ENCODE measurements at regions of chr11 and their contacts with region 1.

Region 1: GRCh38 chr11:103055221-103055890 is 36.6 kb downstream of the DCUN1D5 start:
- DNase-seq: no peak
- H3K4me3 Mint-ChIP-seq: no peak overlapping the region
- H3K27ac Mint-ChIP-seq: no peak overlapping the region
- H3K4me1 Mint-ChIP-seq: peaks cover 13% of the 10 kb centered on the region
- H3K27me3 Mint-ChIP-seq: no peaks in the 10 kb centered on the region

Region 2: GRCh38 chr11:102733232-102733875 is 322.0 kb before region 1 on chr11:
- intact Hi-C with region 1: loop called (anchors 1 kb)
- DNase-seq: peak; percentile 15
- H3K4me3 Mint-ChIP-seq: no peak overlapping the region
- H3K27ac Mint-ChIP-seq: no peak overlapping the region
- H3K4me1 Mint-ChIP-seq: no peaks in the 10 kb centered on the region
- H3K27me3 Mint-ChIP-seq: peaks cover 9% of the 10 kb centered on the region

Region 3: DNA sequence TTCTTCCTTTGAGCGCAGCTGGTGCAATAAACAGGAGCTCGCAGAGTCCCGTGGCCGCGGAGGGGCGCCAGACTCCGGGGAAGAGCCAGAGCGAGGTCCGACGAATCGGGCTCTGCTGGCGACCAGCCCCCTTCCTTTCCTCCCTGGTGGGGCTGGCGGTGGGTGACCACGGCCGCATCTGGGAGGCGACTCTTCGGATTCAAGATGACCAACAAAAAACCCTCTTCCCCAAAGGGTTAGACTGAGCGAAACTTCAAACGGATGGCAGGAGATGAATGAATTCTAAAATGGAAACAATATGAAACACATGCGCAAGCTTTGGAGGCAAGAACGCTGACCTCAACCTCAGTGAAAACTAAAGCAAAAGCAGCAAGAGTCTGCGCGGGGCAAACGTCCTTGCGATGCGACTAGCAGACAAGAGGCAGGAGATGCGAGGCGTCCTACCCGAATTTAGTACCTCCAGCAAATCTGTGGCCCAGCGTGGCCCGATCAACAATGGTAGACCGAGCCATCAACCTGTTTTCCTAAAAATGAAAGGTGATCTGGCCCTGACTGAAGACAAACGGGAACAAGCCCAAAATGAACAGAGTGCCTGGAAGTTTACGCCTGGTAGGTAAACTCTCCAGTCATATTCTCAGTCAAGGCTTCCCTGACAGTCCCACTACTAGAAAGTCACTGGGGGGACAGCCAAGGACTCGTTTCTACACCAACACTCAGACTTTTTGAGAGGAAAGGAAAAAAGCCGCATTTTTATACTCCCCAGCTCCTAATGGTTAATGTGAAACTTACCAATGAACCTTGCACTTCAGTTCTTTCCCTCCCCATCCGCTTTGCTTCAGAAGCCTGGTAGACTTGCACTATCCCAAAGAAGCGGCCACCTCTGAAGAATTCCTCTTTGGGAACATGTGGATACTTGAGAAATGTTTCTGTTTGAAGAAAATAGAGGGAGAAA is 223.6 kb before region 1 on chr11:
- intact Hi-C with region 1: loop called (anchors 10 kb)
- DNase-seq: no peak
- H3K4me3 Mint-ChIP-seq: peak overlapping the region; percentile 56
- H3K27ac Mint-ChIP-seq: no peak overlapping the region
- H3K4me1 Mint-ChIP-seq: no peaks in the 10 kb centered on the region
- H3K27me3 Mint-ChIP-seq: peaks cover 23% of the 10 kb centered on the region

Region 4: GRCh38 chr11:102914238-102915043 is 140.9 kb before region 1 on chr11:
- intact Hi-C with region 1: loop called (anchors 1 kb)
- DNase-seq: no peak
- H3K4me3 Mint-ChIP-seq: no peak overlapping the region
- H3K27ac Mint-ChIP-seq: no peak overlapping the region
- H3K4me1 Mint-ChIP-seq: no peaks in the 10 kb centered on the region
- H3K27me3 Mint-ChIP-seq: peaks cover 6% of the 10 kb centered on the region

Region 5: DNA sequence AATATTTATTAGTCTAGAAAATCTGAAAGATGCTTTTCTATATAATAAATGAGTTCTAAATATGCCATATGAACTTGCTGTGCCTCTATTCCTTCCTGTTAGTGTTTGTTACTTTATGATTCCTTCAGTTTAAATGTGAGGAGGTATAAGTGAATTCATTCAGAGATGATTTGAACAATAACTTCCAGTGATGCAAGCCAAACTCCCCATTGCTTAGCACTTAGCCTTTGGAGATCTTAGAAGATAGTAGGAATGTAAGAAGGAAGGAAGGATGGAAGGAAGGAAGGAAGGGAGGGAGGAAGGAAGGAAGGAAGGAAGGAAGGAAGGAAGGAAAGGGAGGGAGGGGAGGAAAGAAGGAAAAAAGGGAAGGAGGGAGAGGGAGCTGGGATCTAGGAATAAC is 124.9 kb before region 1 on chr11:
- intact Hi-C with region 1: no loop called
- DNase-seq: no peak
- H3K4me3 Mint-ChIP-seq: no peak overlapping the region
- H3K27ac Mint-ChIP-seq: no peak overlapping the region
- H3K4me1 Mint-ChIP-seq: no peaks in the 10 kb centered on the region
- H3K27me3 Mint-ChIP-seq: peaks cover 8% of the 10 kb centered on the region

Region 6: DNA sequence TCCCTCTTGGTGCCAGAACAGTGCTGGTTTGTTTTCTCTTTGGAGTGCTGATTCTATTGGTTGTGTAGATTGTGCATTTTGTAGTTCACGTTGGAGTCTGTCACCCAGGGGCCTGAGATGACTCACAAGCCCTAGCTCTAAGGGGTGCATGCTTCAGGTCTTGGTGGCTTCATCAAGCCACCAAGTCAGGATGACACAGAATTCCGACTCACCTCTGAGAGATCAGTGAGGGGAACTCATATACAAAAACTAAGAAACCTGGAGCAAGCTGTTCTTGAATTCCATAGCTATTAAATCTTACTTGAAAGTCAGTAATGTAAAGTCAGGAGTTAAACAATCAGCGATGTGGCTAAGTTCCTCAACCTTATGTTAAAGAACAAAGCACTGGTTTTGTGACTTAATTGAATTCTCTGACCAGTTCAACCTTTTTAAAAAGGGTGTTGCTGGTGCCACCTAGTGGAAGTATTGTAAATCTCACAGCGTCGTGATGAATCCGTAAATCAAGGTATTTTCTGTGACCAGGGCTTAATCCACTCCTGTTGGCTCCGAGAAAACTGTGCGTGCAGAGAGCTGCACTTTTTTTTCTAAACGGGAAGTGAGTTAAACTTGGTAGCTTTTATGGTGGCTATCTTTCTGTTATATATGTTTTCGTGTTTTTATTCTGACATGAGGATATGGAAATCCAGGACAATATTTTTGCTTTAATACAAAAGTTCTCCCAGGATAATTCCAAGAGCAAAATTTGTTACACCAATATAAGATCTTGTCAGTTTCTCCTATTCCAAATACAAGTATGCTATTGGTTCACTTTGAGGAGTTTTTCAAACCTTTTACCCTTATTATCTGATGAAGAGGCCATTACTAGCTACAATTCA is 114.4 kb before region 1 on chr11:
- intact Hi-C with region 1: loop called (anchors 1 kb)
- DNase-seq: peak; percentile 16
- H3K4me3 Mint-ChIP-seq: no peak overlapping the region
- H3K27ac Mint-ChIP-seq: no peak overlapping the region
- H3K4me1 Mint-ChIP-seq: peaks cover 15% of the 10 kb centered on the region
- H3K27me3 Mint-ChIP-seq: peaks cover 2% of the 10 kb centered on the region

Region 7: DNA sequence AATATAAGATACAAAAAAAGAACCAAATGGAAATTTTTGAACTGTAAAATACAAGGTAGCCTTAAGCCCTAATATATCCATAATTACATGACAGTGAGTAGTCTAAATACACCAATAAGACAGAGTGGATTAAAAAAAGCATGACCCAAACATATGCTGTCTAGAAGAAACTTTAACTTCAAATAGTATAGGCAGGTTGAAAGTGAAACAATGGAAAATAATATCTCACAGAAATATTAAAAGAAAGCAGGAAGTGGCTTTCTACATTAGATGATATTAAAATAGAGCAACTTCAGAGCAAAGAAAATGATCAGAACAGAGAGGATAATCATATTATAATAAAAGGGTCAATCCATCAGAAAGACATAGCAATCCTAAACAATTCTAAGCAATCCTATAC is 14.8 kb after region 1 on chr11:
- intact Hi-C with region 1: loop called (anchors 2 kb)
- DNase-seq: no peak
- H3K4me3 Mint-ChIP-seq: no peak overlapping the region
- H3K27ac Mint-ChIP-seq: peak overlapping the region; percentile 20
- H3K4me1 Mint-ChIP-seq: peaks cover 37% of the 10 kb centered on the region
- H3K27me3 Mint-ChIP-seq: no peaks in the 10 kb centered on the region